ENCODE measurements at regions of chr10 and their contacts with region 1.

Region 1: GRCh38 chr10:72364239-72364777 is 9.6 kb upstream of the DNAJB12 start:
- DNase-seq: peak; percentile 88 to 93 (median 92)
- ATAC-seq: peak; percentile 88 to 96 (median 96)
- H3K4me3 ChIP-seq: peak overlapping the region in 8 of 12 donors; percentile 4 to 40 (median 26)
- H3K27ac ChIP-seq: peak overlapping the region in 10 of 12 donors; percentile 2 to 67 (median 56)
- H3K4me1 ChIP-seq: peaks cover 0 to 14% (median 9%) of the 10 kb centered on the region in 12 donors
- H3K27me3 ChIP-seq: no peaks in the 10 kb centered on the region
- CTCF ChIP-seq: peak; percentile 87 to 98 (median 92)
- POLR2A ChIP-seq: peak in 1 of 2 donors; percentile 52

Region 2: DNA sequence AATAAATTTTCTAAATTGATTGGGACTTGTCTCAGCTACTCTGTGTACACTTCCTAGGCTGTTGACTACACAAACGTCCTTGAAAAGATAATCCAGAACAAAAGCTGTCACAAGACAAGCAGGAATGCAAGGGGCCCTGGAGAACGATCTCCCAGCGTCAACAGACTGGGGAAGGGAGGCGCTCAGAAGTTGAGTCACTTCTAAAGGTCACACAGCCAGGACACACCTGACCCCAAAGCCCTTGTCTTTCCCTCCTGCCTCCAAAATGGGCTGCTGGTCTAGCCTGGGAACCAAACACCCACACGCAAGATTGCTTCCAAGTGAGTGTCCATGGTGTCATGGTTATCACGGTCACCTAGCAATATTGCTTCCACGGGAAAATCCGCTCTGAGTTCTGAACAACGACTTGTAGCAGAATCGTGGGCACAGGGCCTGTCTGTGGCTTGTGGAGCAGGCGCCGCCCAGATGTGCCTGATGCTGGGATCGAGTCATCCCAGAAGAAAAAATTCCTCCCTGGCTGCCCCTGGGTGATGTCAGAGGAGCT is 325.8 kb before region 1 on chr10:
- intact Hi-C with region 1: no loop called
- DNase-seq: no peak
- ATAC-seq: peak in 2 of 4 donors; percentile 20 to 40
- H3K4me3 ChIP-seq: no peak overlapping the region
- H3K27ac ChIP-seq: peak overlapping the region in 3 of 12 donors; percentile 9 to 14 (median 13)
- H3K4me1 ChIP-seq: peaks cover 0 to 35% (median 10%) of the 10 kb centered on the region in 12 donors
- H3K27me3 ChIP-seq: no peaks in the 10 kb centered on the region
- CTCF ChIP-seq: no peak
- POLR2A ChIP-seq: no peak

Region 3: GRCh38 chr10:72455889-72456595 is 91.7 kb after region 1 on chr10:
- intact Hi-C with region 1: no loop called
- DNase-seq: no peak
- ATAC-seq: peak in 2 of 4 donors; percentile 24 to 45
- H3K4me3 ChIP-seq: no peak overlapping the region
- H3K27ac ChIP-seq: no peak overlapping the region
- H3K4me1 ChIP-seq: peaks cover 0 to 18% (median 1%) of the 10 kb centered on the region in 12 donors
- H3K27me3 ChIP-seq: no peaks in the 10 kb centered on the region
- CTCF ChIP-seq: no peak
- POLR2A ChIP-seq: no peak

Region 4: DNA sequence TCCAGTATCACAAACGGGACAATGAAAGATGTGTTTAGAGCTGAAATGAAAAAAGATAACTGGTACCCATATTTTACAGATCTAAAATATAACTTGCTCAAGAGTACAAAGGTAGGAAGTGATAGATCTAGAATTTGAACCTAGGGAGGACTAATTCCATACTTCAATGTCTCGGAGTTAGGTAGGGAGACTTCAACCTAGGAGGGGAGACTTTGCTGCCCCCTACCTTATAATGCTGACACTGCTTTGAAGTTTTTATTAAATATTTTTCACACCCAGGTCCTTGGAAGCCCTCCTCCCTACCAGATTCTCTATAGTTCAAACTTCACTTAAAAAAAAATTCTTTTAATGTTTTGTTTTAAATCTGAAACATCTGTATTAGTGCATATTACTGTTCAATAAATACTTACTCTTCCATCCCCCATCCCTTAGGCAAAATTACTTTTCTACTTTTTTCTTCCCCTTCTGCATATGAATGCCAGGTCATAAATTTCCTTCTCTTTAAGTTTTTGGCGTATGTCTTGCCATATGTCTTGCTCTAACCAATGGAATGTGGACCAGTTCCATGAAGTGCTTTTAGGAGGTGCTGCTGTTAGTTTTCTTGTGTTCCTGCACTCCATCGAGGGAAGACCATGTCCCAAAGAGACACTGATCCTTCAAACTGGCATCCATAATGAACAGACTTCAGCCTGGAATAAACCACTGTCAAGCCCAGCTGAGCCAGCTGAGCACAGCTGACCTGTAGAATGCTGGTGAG is 203.8 kb after region 1 on chr10:
- intact Hi-C with region 1: loop called in 1 of 10 experiments (anchors 5 kb)
- DNase-seq: no peak
- ATAC-seq: peak in 2 of 4 donors; percentile 33 to 50
- H3K4me3 ChIP-seq: no peak overlapping the region
- H3K27ac ChIP-seq: peak overlapping the region in 2 of 12 donors; percentile 22 to 24
- H3K4me1 ChIP-seq: peaks cover 0 to 17% (median 0%) of the 10 kb centered on the region in 12 donors
- H3K27me3 ChIP-seq: no peaks in the 10 kb centered on the region
- CTCF ChIP-seq: peak in 9 of 12 donors; percentile 8 to 46 (median 31)
- POLR2A ChIP-seq: no peak

Region 5: GRCh38 chr10:72702868-72703581 is 338.7 kb after region 1 on chr10:
- intact Hi-C with region 1: loop called in 5 of 10 experiments (anchors 10 kb)
- DNase-seq: no peak
- ATAC-seq: peak in 2 of 4 donors; percentile 49 to 65
- H3K4me3 ChIP-seq: no peak overlapping the region
- H3K27ac ChIP-seq: peak overlapping the region in 1 of 12 donors; percentile 49
- H3K4me1 ChIP-seq: peaks cover 0 to 11% (median 3%) of the 10 kb centered on the region in 12 donors
- H3K27me3 ChIP-seq: no peaks in the 10 kb centered on the region
- CTCF ChIP-seq: peak in 3 of 12 donors; percentile 8 to 23 (median 14)
- POLR2A ChIP-seq: no peak

Region 6: GRCh38 chr10:72875250-72876055 is 511.1 kb after region 1 on chr10:
- intact Hi-C with region 1: loop called in 8 of 10 experiments (anchors 2 to 10 kb)
- DNase-seq: no peak
- ATAC-seq: no peak
- H3K4me3 ChIP-seq: no peak overlapping the region
- H3K27ac ChIP-seq: no peak overlapping the region
- H3K4me1 ChIP-seq: no peaks in the 10 kb centered on the region
- H3K27me3 ChIP-seq: no peaks in the 10 kb centered on the region
- CTCF ChIP-seq: peak in 11 of 12 donors; percentile 6 to 64 (median 49)
- POLR2A ChIP-seq: no peak

Region 7: GRCh38 chr10:73003822-73004221 is 639.5 kb after region 1 on chr10:
- intact Hi-C with region 1: no loop called
- DNase-seq: no peak
- ATAC-seq: no peak
- H3K4me3 ChIP-seq: no peak overlapping the region
- H3K27ac ChIP-seq: no peak overlapping the region
- H3K4me1 ChIP-seq: no peaks in the 10 kb centered on the region
- H3K27me3 ChIP-seq: no peaks in the 10 kb centered on the region
- CTCF ChIP-seq: no peak
- POLR2A ChIP-seq: no peak

Region 8: DNA sequence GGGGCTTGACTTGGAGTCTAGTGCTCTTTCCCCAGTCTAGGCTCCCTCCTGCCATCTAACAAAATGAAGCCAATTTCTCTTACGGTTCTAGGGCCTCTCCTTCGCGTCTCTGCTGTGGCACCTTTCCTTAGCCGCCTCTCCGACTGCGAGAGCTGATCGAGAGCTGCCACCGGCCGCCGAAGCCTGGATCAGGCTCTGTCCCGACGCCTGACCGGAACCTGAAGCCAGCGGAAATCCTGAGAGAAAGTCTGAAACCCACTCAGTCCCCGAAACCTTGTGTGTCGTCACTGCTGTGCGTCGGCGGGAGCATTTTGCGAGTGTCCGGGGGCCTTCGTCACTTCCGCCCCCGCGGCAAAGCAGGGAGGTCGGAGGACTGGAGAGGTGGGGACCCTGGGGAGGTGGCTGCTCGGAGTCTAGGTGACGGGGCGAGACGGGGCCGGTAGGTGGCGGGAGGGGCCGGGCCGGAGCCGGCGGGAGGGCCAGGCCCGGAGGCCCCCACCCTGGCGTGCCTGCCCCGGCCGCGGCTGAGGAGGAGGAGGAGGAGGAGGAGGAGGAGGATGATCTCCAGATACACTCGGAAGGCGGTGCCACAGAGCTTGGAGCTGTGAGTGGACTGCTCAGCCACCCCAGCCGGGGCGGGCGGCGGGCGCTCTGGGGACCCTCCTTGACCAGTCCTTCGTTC is 803.6 kb after region 1 on chr10 and contains the starts of genes ECD and FAM149B1:
- intact Hi-C with region 1: loop called in 2 of 10 experiments (anchors 5 to 10 kb)
- DNase-seq: peak; percentile 94 to 96 (median 95)
- ATAC-seq: peak; percentile 92 to 99 (median 98)
- H3K4me3 ChIP-seq: peak within 1 kb of the TSS; percentile 71 to 98 (median 82)
- H3K27ac ChIP-seq: peak within 1 kb of the TSS; percentile 80 to 97 (median 94)
- H3K4me1 ChIP-seq: peaks cover 0 to 50% (median 31%) of the 10 kb centered on the region in 12 donors
- H3K27me3 ChIP-seq: no peaks in the 10 kb centered on the region
- CTCF ChIP-seq: peak in 4 of 12 donors; percentile 21 to 36 (median 26)
- POLR2A ChIP-seq: peak; percentile 76 to 95
- total RNA-seq, gene ECD: 13.3 to 21.9 (median 18.4) TPM
- total RNA-seq, gene FAM149B1: 9.9 to 21.8 (median 17.8) TPM

Measured in heart left ventricle (tissue), 16 donors.